HEK293T (cell line): ENCODE measurements at regions of chr1 and their contacts with region 1.

Region 1: DNA sequence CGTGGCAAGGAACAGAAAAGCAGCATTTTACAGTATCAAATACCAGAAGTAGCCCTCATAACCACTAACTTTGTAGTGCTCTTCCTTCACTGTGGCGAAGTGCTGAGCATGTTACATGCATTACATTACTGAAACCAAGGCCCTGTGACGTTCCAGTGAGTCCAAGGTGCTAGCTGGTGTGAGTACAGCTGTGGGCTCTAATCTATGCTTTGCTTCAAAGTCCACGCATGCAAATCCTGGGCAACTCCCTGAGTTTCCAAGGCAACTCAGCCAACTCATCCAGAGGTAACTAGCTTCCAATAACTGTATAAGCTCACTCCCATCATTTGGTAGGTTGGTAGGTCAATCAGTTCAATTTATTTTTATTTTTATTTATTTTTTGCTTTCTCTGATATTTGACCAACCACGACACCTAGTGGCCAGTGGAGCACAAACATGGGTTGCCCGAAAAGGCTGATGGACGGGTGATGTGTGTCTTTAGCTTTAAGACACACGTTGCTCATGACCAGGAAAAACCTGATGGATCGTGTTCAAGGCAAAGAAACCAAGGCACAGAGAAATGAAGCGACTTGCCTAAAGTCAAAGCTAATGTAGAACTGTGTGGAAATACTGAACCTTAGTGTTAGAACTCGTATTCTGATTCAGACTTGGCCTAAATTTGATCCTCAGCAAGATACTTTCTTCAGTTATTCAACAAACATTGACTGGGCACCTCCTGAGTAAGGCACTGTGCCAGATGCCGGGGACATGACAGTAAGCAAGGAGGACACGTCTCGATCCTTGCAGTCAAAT is 73.0 kb downstream of the GNG12 start:
- DNase-seq: peak; percentile 80

Region 2: GRCh38 chr1:67524143-67525052 is 235.8 kb before region 1 on chr1:
- CTCF ChIA-PET with region 1: interaction called, 14 read pairs
- POLR2A ChIA-PET with region 1: no interaction called
- DNase-seq: no peak

Region 3: DNA sequence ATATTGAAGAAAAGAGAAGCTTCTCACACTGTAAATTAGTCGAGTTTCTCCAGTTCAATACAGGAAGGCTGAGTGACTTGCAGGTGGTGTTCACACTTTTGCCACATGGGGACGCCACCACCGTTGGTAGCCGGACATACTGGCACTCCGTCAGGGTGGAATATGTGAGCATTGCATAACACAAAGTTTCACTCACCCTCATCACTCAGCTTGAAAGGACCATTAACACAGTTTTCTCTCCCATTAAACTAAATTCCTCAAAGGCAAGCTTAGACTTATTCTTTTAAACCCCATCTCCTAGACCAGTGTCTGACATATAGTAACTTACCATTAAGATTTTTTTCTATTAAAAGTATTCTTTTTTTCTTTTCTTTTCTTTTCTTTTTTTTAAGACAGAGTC is 224.8 kb before region 1 on chr1:
- CTCF ChIA-PET with region 1: interaction called, 57 read pairs
- POLR2A ChIA-PET with region 1: interaction called, 6 read pairs
- DNase-seq: peak; percentile 86

Region 4: DNA sequence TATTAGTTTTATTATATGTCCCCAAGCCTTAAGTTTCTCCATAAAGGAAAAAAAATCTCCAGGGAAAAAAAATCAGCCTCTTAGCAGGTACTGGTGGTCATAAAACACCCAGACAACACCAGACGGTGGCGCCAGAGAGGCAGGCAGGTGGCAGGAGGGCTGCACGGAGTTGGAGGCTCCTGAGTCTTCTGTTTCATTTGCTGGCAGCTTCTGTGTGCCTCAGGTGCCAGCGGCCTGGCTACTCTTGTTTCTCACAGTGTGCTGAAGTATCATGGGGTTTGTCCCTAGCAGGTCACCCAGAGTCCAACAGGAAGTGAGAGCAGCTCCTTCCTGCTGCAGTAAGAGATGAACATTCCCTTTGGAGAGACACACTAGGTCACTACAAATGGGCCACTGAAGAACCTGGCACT is 198.5 kb before region 1 on chr1:
- CTCF ChIA-PET with region 1: interaction called, 32 read pairs
- POLR2A ChIA-PET with region 1: no interaction called
- DNase-seq: peak; percentile 94

Region 5: DNA sequence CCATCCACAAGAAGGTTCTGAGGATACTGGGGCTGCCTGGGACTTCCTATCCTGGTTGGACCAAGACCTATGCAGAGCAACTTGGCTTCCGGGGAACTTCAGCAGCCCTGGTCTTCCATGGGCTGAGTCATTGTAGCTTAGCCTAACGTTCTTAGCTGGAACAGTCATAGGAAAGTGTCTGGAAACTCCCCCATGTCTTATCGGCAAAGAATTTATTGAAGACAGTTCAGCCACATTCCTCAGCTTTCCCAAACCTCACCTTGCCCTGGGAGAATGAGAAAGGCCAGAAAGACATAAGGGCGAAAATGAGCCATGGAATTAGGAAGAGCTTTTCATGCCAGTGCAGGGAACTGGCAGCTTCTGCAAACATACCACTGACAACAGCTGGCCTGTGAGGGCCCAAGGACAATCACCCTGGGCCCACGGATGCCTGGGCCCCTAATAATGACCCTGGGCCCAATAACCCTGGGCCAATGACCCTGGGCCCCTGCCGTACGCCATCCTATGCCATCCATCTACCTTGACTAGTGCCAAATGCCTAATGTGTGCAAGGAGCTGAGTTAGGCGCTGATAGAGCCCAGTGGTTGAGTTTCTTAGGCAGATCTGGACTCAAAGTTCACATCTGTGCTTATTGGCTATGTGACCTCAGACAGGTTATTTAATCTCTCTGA is 189.6 kb before region 1 on chr1:
- CTCF ChIA-PET with region 1: interaction called, 14 read pairs
- POLR2A ChIA-PET with region 1: no interaction called
- DNase-seq: no peak

Region 6: DNA sequence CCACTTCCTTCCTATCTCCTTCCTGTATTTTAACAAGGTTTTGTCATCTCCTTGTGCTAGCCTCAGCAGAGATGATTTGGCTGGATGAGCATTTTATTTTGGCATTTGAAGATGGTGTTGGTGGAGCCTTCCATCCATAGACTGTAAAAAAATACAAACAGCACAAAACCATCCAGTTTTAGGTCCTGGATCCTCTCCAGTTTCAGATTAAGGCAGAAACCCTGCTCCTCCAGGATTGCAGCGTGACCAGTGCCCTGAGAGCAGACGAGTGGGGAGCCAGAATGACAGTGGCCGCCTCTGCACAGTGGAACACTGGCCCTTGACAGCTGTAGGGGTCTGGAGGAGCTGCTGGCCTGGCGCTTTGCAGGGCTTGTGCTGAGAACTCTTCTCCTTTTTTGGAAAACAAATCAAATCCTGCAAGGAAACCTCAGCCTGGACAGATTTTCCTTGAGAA is 147.4 kb before region 1 on chr1:
- CTCF ChIA-PET with region 1: no interaction called
- POLR2A ChIA-PET with region 1: no interaction called
- DNase-seq: no peak

Region 7: DNA sequence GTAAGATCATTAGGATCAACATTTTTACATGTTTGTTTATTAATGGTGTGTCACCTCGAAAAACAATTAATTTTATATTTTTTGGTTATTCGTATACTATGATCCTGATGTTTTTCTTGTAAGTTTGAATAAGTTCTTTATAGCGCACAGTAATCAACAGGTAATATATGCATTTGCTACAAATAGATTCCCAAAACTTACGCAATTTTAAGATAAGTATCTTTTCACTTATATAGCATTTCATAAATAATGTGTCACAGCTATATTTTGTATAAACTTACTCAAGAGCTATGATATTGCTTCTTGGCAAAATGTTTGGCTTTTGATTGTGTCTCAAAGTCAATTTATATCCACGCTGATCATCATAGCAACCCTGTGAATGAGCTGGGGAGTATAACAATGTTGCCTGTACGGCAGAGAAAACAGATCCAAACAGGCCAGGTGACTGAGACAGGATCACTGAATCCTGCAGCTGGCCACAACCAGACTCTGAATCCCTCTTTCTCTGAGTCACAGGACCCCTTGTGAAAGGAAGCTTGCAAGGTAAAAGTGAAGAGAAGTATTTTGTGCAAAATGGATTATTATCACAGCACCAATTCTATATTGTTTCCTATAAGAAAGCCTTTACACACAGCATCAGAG is 24.4 kb after region 1 on chr1:
- CTCF ChIA-PET with region 1: no interaction called
- POLR2A ChIA-PET with region 1: no interaction called
- DNase-seq: no peak